Common myeloid progenitor, CD34-positive (primary cell): ENCODE measurements at regions of chr14 and their contacts with region 1.

Region 1: DNA sequence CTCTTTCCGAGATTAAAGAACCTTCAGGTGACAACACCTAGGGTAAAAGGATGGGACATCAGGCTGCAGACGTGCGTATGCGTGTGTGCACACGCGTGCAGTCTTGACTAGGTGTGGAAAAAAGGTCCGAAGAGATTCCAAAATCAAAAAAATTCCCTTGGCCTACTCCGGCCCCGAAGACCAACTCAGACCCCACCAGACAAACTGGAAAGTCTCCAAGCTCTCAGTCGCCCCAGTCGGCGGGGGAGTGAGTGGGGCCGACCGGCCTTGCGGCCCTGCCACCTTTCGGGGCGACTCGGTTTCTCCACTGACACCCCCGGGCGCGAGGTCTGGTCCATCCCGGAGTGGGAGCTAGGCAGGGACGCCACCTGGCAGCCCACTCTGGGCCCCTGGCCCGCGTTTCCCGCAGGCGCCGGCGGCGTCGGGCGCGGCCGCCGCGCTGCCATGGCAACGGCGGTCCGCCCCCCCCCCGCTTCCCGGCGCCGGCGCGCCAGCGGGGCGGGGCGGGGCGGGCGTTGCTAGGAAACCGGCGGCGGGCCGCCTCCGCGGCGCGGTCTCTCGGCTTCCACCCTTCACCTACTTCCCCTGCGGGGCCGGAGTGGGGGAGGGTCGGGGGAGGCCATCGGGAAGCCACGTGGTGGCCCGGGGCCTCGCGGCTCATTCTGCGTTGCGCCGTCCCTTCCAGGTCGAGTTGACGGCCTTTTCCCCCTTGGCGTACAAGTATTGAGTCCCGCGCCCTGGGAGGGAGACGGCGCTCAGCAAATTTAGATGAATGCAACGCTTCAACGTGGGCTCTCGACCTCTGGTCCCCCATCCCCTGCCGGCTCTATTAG is 253.1 kb downstream of the EFCAB11 start:
- DNase-seq: peak; percentile 56 to 81 (median 76)
- H3K4me3 ChIP-seq: peak overlapping the region in 6 of 7 experiments; percentile 54 to 78 (median 67)
- H3K27ac ChIP-seq: peak overlapping the region in 1 of 2 experiments; percentile 32
- H3K4me1 ChIP-seq: peaks cover 6 to 15% (median 13%) of the 10 kb centered on the region in 4 experiments
- H3K27me3 ChIP-seq: no peaks in the 10 kb centered on the region

Region 2: GRCh38 chr14:89435492-89435891 is 265.9 kb before region 1 on chr14:
- CTCF ChIA-PET with region 1: no interaction called
- POLR2A ChIA-PET with region 1: no interaction called
- DNase-seq: peak in 1 of 3 donors; percentile 47
- H3K4me3 ChIP-seq: no peak overlapping the region
- H3K27ac ChIP-seq: no peak overlapping the region
- H3K4me1 ChIP-seq: peaks cover 3 to 17% (median 11%) of the 10 kb centered on the region in 4 experiments
- H3K27me3 ChIP-seq: no peaks in the 10 kb centered on the region

Region 3: GRCh38 chr14:89674936-89675335 is 26.5 kb before region 1 on chr14:
- CTCF ChIA-PET with region 1: no interaction called
- POLR2A ChIA-PET with region 1: no interaction called
- DNase-seq: no peak
- H3K4me3 ChIP-seq: no peak overlapping the region
- H3K27ac ChIP-seq: no peak overlapping the region
- H3K4me1 ChIP-seq: peaks cover 0 to 10% (median 6%) of the 10 kb centered on the region in 4 experiments
- H3K27me3 ChIP-seq: no peaks in the 10 kb centered on the region

Region 4: DNA sequence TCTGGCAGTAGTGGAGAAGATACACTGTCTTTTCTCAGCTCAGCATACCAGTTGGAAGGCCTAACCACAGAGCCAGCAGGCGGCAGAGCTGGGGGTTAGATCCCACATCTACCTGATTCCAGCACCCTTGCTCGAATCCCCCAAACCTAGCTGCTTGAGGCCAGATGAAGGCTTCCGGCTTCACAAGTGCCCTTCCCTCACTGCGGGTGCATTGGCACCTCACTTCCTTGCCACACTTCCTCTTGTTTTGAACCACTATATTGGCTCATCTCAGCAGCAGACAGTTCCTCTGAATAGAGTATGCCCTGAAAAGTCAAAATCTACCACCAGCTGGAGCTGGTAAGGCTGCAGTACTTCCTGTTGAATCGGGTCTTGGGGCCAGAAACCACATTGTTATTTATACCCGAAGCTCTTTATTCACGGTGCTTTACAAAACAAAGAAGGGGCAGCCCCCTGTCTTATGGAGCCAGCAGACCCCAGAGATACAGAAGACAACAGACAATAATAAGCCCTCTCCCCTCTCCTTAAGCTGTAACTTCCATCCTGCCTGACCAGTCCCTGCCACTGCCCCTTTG is 19.4 kb after region 1 on chr14:
- CTCF ChIA-PET with region 1: interaction called, 10 read pairs
- POLR2A ChIA-PET with region 1: no interaction called
- DNase-seq: peak; percentile 88 to 98 (median 97)
- H3K4me3 ChIP-seq: peak overlapping the region in 4 of 7 experiments; percentile 3 to 48 (median 28)
- H3K27ac ChIP-seq: peak overlapping the region in 1 of 2 experiments; percentile 62
- H3K4me1 ChIP-seq: peaks cover 33 to 48% (median 43%) of the 10 kb centered on the region in 4 experiments
- H3K27me3 ChIP-seq: no peaks in the 10 kb centered on the region